ENCODE measurements at regions of chr7 and their contacts with region 1.

Region 1: GRCh38 chr7:130242198-130243014 is 24.3 kb upstream of the CPA2 start:
- DNase-seq: peak; percentile 23 to 70 (median 40)
- ATAC-seq: peak; percentile 60
- H3K4me3 ChIP-seq: no peak overlapping the region
- H3K4me3 Mint-ChIP-seq: no peak overlapping the region
- H3K27ac ChIP-seq: no peak overlapping the region
- H3K27ac Mint-ChIP-seq: no peak overlapping the region
- H3K4me1 ChIP-seq: no peaks in the 10 kb centered on the region
- H3K4me1 Mint-ChIP-seq: peaks cover 8% of the 10 kb centered on the region
- H3K27me3 ChIP-seq: no peaks in the 10 kb centered on the region
- H3K27me3 Mint-ChIP-seq: no peaks in the 10 kb centered on the region
- CTCF ChIP-seq: peak; percentile 85

Region 2: DNA sequence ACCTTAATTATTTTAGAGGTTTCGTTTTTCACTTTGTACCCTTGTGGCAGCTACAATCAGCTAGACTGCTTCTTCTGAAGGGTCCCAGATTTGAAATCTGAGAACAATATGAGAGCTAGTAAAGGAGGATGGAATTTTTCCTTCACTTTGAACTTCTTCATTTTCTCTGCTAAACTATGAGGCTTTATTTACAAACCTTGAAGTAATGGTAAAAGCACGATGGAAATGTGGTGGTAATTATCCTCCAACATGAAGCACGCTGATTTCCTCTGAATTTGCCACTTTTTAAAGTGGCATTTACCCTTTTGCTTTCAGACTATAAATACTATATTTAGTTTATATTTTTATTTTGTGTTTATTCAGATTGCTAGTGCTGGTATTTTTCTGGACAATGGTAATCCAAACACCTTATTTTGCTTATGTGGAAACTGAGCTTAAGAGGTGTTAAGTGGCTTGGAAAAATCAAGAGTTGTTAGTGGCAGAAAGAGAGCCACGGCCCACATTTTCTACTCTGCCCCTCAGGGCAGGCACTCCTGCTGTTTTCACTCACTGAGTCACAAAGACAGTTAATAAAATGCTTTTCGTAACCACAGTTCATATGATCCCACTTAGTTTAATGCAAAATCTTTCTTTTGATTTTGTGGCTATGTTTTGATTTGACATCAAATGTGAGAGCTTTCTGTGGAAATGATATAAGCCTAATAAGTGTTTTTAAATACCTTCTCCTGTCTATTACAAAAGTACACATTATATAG is 32.0 kb before region 1 on chr7:
- CTCF ChIA-PET with region 1: no interaction called
- POLR2A ChIA-PET with region 1: no interaction called
- intact Hi-C with region 1: loop called in 1 of 2 experiments (anchors 1 kb)
- DNase-seq: no peak
- ATAC-seq: no peak
- H3K4me3 ChIP-seq: no peak overlapping the region
- H3K4me3 Mint-ChIP-seq: no peak overlapping the region
- H3K27ac ChIP-seq: no peak overlapping the region
- H3K27ac Mint-ChIP-seq: no peak overlapping the region
- H3K4me1 ChIP-seq: peaks cover 9% of the 10 kb centered on the region
- H3K4me1 Mint-ChIP-seq: peaks cover 5% of the 10 kb centered on the region
- H3K27me3 ChIP-seq: no peaks in the 10 kb centered on the region
- H3K27me3 Mint-ChIP-seq: peaks cover 9% of the 10 kb centered on the region
- CTCF ChIP-seq: no peak

Region 3: GRCh38 chr7:130227883-130228575 is 14.4 kb before region 1 on chr7:
- CTCF ChIA-PET with region 1: no interaction called
- POLR2A ChIA-PET with region 1: no interaction called
- intact Hi-C with region 1: no loop called
- DNase-seq: no peak
- ATAC-seq: no peak
- H3K4me3 ChIP-seq: no peak overlapping the region
- H3K4me3 Mint-ChIP-seq: no peak overlapping the region
- H3K27ac ChIP-seq: no peak overlapping the region
- H3K27ac Mint-ChIP-seq: no peak overlapping the region
- H3K4me1 ChIP-seq: no peaks in the 10 kb centered on the region
- H3K4me1 Mint-ChIP-seq: no peaks in the 10 kb centered on the region
- H3K27me3 ChIP-seq: no peaks in the 10 kb centered on the region
- H3K27me3 Mint-ChIP-seq: no peaks in the 10 kb centered on the region
- CTCF ChIP-seq: no peak

Region 4: DNA sequence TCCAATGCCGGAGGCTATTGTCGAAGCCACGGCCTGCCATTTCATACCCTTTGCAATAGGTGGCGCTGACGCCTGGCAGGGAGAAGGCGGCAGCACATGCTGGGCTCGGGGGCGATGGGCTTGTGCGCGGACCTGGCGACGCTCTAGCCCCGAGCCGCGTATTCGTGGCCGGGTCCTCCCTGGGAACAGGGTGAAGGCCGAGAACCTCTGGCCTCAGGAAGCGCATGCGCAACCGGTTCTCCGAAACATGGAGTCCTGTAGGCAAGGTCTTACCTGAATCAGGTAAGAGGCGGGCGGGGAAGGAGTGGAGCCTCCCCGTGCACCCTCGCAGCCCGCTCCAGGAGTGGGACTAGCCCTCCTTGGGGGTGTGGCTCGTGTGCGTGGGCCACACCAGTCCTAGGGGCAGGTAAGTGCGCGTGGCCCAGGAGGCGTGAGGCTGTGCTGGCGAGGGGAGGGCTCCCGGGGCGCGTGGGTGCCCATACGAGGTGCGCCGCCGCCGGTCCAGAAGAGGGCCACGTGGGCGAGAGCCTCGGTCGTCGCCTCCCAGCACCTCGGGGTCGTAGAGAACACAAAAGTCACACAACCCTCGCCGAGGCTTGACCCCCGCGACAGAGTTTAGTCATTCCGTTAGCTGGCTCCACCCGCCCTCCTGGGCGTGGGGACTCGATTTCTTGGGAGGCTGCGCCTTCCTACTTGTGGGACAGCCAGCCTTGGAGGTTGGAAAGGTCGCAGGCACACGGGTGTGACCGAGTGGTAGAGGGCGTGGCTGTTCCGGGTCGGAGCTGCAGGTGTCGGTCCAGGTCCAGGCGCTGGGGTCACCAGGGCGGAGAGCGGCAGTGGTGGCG is 243.9 kb after region 1 on chr7:
- CTCF ChIA-PET with region 1: interaction called, 6 read pairs
- POLR2A ChIA-PET with region 1: no interaction called
- intact Hi-C with region 1: loop called (anchors 2 to 10 kb)
- DNase-seq: peak; percentile 26 to 82 (median 44)
- ATAC-seq: peak; percentile 86
- H3K4me3 ChIP-seq: peak overlapping the region; percentile 72
- H3K4me3 Mint-ChIP-seq: peak overlapping the region; percentile 89
- H3K27ac ChIP-seq: no peak overlapping the region
- H3K27ac Mint-ChIP-seq: no peak overlapping the region
- H3K4me1 ChIP-seq: peaks cover 23% of the 10 kb centered on the region
- H3K4me1 Mint-ChIP-seq: peaks cover 21% of the 10 kb centered on the region
- H3K27me3 ChIP-seq: peaks cover 21 to 23% of the 10 kb centered on the region in 2 experiments
- H3K27me3 Mint-ChIP-seq: peaks cover 67% of the 10 kb centered on the region
- CTCF ChIP-seq: peak; percentile 81

Region 5: GRCh38 chr7:130560970-130561369 is 318.6 kb after region 1 on chr7:
- CTCF ChIA-PET with region 1: no interaction called
- POLR2A ChIA-PET with region 1: no interaction called
- intact Hi-C with region 1: loop called (anchors 5 kb)
- DNase-seq: peak in 4 of 14 experiments; percentile 5 to 31 (median 18)
- ATAC-seq: no peak
- H3K4me3 ChIP-seq: no peak overlapping the region
- H3K4me3 Mint-ChIP-seq: no peak overlapping the region
- H3K27ac ChIP-seq: no peak overlapping the region
- H3K27ac Mint-ChIP-seq: no peak overlapping the region
- H3K4me1 ChIP-seq: no peaks in the 10 kb centered on the region
- H3K4me1 Mint-ChIP-seq: no peaks in the 10 kb centered on the region
- H3K27me3 ChIP-seq: no peaks in the 10 kb centered on the region
- H3K27me3 Mint-ChIP-seq: no peaks in the 10 kb centered on the region
- CTCF ChIP-seq: peak; percentile 26

Region 6: DNA sequence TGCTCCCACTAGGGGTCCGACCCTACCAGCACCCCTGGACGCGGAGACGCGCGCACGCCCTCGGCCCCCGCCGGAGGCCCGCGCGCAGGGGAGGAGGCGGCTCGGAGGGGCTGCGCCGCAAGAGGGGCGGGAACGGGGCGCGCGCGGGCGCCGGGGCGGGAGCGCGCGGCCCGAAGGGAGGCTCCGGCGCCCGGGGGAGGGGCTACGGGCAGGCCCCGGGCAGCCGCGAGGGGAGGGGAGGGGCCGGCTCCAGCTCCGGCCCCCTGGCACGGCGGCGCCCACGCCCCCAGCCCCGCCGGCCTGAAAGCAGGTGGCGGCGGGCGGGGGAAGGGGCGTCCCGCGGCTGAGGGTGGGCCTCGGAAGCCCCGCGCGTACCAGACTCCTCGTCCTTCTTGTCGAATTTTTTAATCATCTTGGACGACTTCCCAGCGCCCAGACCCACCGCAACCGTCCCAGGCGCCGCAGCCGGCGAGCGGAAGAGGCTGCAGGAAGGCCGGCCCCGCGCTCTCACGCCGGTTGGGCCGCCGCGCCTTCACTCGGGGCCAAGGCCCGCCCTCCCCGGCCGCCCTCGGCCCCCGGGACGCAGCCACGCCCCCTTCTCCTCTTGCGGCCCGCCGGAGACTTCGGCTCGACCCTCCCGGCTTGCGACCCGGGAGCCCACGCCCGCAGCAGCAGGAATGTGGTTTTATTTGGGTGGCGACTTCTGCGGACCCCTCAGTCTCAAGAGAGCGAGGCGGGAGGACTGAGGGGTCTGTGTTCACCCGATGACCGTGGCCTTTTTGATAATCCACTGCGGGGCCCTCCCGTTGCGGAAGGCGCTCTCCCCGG is 426.1 kb after region 1 on chr7 and contains the start of gene COPG2:
- CTCF ChIA-PET with region 1: no interaction called
- POLR2A ChIA-PET with region 1: no interaction called
- intact Hi-C with region 1: no loop called
- DNase-seq: peak; percentile 21 to 85 (median 68)
- ATAC-seq: peak; percentile 77
- H3K4me3 ChIP-seq: peak within 1 kb of the TSS; percentile 83
- H3K4me3 Mint-ChIP-seq: peak within 1 kb of the TSS; percentile 95
- H3K27ac ChIP-seq: peak within 1 kb of the TSS; percentile 39 to 41
- H3K27ac Mint-ChIP-seq: peak within 1 kb of the TSS; percentile 82
- H3K4me1 ChIP-seq: peaks cover 13% of the 10 kb centered on the region
- H3K4me1 Mint-ChIP-seq: peaks cover 21% of the 10 kb centered on the region
- H3K27me3 ChIP-seq: no peaks in the 10 kb centered on the region
- H3K27me3 Mint-ChIP-seq: no peaks in the 10 kb centered on the region
- CTCF ChIP-seq: no peak
- total RNA-seq, gene COPG2: 4.1 to 4.3 TPM

Region 7: DNA sequence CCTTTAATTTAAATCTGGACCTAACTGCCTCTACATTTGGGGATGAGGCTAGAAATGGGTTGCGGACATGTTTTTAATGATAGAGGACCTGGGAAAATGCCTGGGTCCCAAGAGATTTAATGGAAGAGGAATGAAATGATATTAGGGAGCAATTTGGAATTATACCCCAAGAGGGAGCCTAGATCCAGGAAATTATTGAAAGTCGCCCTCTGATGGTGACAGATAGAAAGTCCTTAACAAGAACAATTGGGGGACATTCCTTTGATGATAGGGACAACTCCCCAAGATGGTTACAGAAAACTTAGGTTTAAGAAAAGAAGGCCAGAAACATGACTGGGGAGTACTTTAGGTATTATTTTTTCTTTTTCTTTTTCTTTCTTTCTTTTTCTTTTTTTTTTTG is 453.4 kb after region 1 on chr7:
- CTCF ChIA-PET with region 1: no interaction called
- POLR2A ChIA-PET with region 1: no interaction called
- intact Hi-C with region 1: loop called in 1 of 2 experiments (anchors 2 kb)
- DNase-seq: peak in 3 of 14 experiments; percentile 11 to 28 (median 15)
- ATAC-seq: no peak
- H3K4me3 ChIP-seq: no peak overlapping the region
- H3K4me3 Mint-ChIP-seq: no peak overlapping the region
- H3K27ac ChIP-seq: no peak overlapping the region
- H3K27ac Mint-ChIP-seq: no peak overlapping the region
- H3K4me1 ChIP-seq: no peaks in the 10 kb centered on the region
- H3K4me1 Mint-ChIP-seq: no peaks in the 10 kb centered on the region
- H3K27me3 ChIP-seq: no peaks in the 10 kb centered on the region
- H3K27me3 Mint-ChIP-seq: no peaks in the 10 kb centered on the region
- CTCF ChIP-seq: no peak

Region 8: GRCh38 chr7:130758429-130759056 is 516.1 kb after region 1 on chr7:
- CTCF ChIA-PET with region 1: interaction called, 3 read pairs
- POLR2A ChIA-PET with region 1: no interaction called
- intact Hi-C with region 1: loop called (anchors 1 kb)
- DNase-seq: peak in 3 of 14 experiments; percentile 49 to 71 (median 67)
- ATAC-seq: peak; percentile 48
- H3K4me3 ChIP-seq: no peak overlapping the region
- H3K4me3 Mint-ChIP-seq: no peak overlapping the region
- H3K27ac ChIP-seq: no peak overlapping the region
- H3K27ac Mint-ChIP-seq: no peak overlapping the region
- H3K4me1 ChIP-seq: no peaks in the 10 kb centered on the region
- H3K4me1 Mint-ChIP-seq: no peaks in the 10 kb centered on the region
- H3K27me3 ChIP-seq: no peaks in the 10 kb centered on the region
- H3K27me3 Mint-ChIP-seq: peaks cover 7% of the 10 kb centered on the region
- CTCF ChIP-seq: peak; percentile 92

Region 9: GRCh38 chr7:130831817-130832481 is 589.5 kb after region 1 on chr7:
- CTCF ChIA-PET with region 1: no interaction called
- POLR2A ChIA-PET with region 1: no interaction called
- intact Hi-C with region 1: loop called (anchors 2 to 5 kb)
- DNase-seq: peak in 4 of 14 experiments; percentile 9 to 71 (median 50)
- ATAC-seq: no peak
- H3K4me3 ChIP-seq: no peak overlapping the region
- H3K4me3 Mint-ChIP-seq: no peak overlapping the region
- H3K27ac ChIP-seq: no peak overlapping the region
- H3K27ac Mint-ChIP-seq: no peak overlapping the region
- H3K4me1 ChIP-seq: no peaks in the 10 kb centered on the region
- H3K4me1 Mint-ChIP-seq: no peaks in the 10 kb centered on the region
- H3K27me3 ChIP-seq: no peaks in the 10 kb centered on the region
- H3K27me3 Mint-ChIP-seq: peaks cover 22% of the 10 kb centered on the region
- CTCF ChIP-seq: peak; percentile 89